Gastrocnemius medialis (tissue), 4 donors: ENCODE measurements at regions of chr18 and their contacts with region 1.

Region 1: GRCh38 chr18:6249170-6249569 is 165.5 kb downstream of the L3MBTL4 start:
- DNase-seq: no peak
- ATAC-seq: no peak
- H3K4me3 ChIP-seq: no peak overlapping the region
- H3K27ac ChIP-seq: no peak overlapping the region
- H3K4me1 ChIP-seq: no peaks in the 10 kb centered on the region
- H3K27me3 ChIP-seq: no peaks in the 10 kb centered on the region
- CTCF ChIP-seq: no peak
- POLR2A ChIP-seq: no peak

Region 2: GRCh38 chr18:5334456-5335075 is 914.6 kb before region 1 on chr18:
- in situ Hi-C with region 1: no loop called
- intact Hi-C with region 1: no loop called
- DNase-seq: no peak
- ATAC-seq: no peak
- H3K4me3 ChIP-seq: no peak overlapping the region
- H3K27ac ChIP-seq: no peak overlapping the region
- H3K4me1 ChIP-seq: no peaks in the 10 kb centered on the region
- H3K27me3 ChIP-seq: no peaks in the 10 kb centered on the region
- CTCF ChIP-seq: no peak
- POLR2A ChIP-seq: no peak

Region 3: GRCh38 chr18:5943514-5943913 is 305.7 kb before region 1 on chr18:
- in situ Hi-C with region 1: no loop called
- intact Hi-C with region 1: no loop called
- DNase-seq: no peak
- ATAC-seq: no peak
- H3K4me3 ChIP-seq: no peak overlapping the region
- H3K27ac ChIP-seq: no peak overlapping the region
- H3K4me1 ChIP-seq: no peaks in the 10 kb centered on the region
- H3K27me3 ChIP-seq: no peaks in the 10 kb centered on the region
- CTCF ChIP-seq: no peak
- POLR2A ChIP-seq: no peak

Region 4: GRCh38 chr18:6022089-6022444 is 227.1 kb before region 1 on chr18:
- in situ Hi-C with region 1: no loop called
- intact Hi-C with region 1: no loop called
- DNase-seq: no peak
- ATAC-seq: no peak
- H3K4me3 ChIP-seq: no peak overlapping the region
- H3K27ac ChIP-seq: no peak overlapping the region
- H3K4me1 ChIP-seq: no peaks in the 10 kb centered on the region
- H3K27me3 ChIP-seq: no peaks in the 10 kb centered on the region
- CTCF ChIP-seq: no peak
- POLR2A ChIP-seq: no peak

Region 5: DNA sequence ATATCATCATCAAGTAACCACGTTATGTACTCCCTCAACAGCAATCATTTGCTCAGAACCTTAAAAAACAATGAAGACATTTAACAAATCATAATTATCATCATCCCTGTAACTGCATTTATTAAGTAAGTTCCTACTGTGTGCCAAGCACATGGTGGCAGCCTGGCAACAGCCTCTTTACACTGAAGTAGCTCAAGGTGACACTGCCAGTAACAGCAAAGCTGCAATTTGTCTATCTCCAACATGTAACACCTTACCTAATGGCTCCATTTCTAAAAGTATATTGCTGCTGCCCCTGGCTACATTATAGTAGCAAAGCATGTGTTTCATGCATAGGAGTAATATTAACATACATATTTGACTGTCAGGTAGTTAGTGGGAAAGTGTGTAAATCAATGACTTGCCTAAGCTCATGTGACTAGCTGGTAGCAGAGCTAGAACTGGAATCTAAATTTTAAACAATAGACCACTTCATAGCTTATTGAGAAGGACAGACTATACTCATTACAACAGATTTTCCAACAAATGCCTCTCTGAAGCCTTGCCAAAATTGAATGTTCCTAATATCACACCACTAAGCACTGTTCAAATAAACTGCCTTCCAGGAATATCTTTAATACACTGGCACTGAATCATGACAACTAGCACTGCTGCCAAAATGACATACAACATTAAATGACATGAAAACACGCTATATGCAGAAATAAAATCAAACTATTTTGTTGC is 78.9 kb after region 1 on chr18:
- in situ Hi-C with region 1: loop called in 2 of 4 experiments (anchors 25 kb)
- intact Hi-C with region 1: no loop called
- DNase-seq: no peak
- ATAC-seq: no peak
- H3K4me3 ChIP-seq: no peak overlapping the region
- H3K27ac ChIP-seq: no peak overlapping the region
- H3K4me1 ChIP-seq: no peaks in the 10 kb centered on the region
- H3K27me3 ChIP-seq: no peaks in the 10 kb centered on the region
- CTCF ChIP-seq: no peak
- POLR2A ChIP-seq: no peak

Region 6: DNA sequence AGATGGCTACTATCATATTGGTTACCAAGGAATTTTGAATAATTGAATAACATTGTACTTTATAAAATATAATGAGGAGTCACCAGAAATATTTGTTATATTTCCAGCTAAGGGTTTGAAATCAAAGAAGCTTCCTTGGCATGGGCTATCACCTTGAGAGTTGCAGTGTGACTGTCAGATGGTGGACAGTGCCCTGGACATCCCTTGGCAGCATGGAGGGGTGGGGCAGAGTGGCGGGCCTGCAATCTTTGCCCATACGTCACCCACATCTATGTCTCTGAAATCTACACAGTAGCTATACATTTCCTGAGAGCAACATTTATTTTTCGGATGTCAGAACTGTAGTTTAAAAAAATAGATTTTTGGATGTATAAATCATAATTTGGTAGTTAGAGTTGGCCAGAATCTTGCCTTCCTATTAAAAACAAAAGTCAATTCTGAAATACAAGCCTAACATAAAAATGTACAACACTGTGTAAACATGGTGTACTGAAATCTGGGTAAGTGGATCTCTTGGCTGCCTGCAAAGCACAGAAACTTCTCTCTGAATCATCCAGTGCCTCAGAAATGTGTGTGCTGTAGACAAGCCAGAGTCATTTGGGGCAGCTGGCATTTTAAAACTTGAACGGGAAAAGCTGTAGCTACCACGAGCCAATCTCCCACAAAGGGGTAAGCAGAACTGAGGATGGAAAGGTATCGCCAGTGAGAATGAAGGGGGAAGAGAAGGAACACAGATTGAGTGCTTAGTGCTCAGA is 356.1 kb after region 1 on chr18:
- in situ Hi-C with region 1: no loop called
- intact Hi-C with region 1: no loop called
- DNase-seq: peak; percentile 19 to 21
- ATAC-seq: peak; percentile 70 to 92
- H3K4me3 ChIP-seq: no peak overlapping the region
- H3K27ac ChIP-seq: peak overlapping the region in 1 of 4 donors; percentile 43
- H3K4me1 ChIP-seq: peaks cover 0 to 5% of the 10 kb centered on the region in 2 donors
- H3K27me3 ChIP-seq: no peaks in the 10 kb centered on the region
- CTCF ChIP-seq: no peak
- POLR2A ChIP-seq: no peak